HEK293T (cell line): ENCODE measurements at regions of chr7 and their contacts with region 1.

Region 1: DNA sequence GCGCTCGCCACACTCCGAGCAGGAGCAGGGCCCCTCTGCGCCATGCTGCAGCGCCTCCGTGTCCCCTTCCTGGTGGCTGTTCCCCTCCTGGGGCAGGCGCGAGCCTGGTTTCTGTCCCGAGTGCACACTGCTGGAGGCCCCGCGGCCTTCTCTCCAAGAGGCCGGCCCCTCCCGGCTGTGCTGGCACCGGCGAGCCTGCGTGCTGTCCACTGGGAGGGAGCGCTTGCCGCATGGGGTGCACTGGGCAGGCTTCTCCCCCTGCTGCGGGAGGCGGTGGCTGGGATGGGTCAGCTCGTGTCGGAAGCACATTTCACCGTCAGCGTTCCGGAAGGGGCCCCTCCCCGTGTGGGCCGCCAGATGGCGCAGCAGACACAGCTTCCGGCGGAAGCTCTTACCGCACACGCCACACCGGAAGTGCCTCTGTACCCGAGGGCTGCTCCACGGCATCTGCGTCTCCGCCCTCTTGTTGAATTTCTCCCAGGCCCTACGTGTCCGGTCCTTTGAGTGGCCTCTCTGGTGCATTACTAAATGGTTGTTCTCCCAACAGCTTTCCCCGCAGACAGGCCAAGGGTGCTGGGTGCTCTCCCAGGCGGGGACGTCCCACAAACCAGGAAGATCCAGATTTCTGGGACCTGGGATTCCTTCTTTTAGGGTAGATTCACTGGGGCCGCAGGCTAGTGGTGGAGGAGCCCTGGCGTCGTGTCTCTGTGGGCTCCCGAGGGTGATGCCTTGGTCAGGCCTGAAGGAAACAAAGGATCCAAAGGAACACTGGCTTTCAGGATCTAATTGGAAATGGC is 18.7 kb downstream of the ZNF786 start:
- DNase-seq: no peak

Region 2: GRCh38 chr7:149016876-149017275 is 55.0 kb before region 1 on chr7:
- CTCF ChIA-PET with region 1: no interaction called
- POLR2A ChIA-PET with region 1: no interaction called
- DNase-seq: no peak

Region 3: GRCh38 chr7:149060156-149060555 is 11.7 kb before region 1 on chr7:
- CTCF ChIA-PET with region 1: no interaction called
- POLR2A ChIA-PET with region 1: no interaction called
- DNase-seq: no peak

Region 4: DNA sequence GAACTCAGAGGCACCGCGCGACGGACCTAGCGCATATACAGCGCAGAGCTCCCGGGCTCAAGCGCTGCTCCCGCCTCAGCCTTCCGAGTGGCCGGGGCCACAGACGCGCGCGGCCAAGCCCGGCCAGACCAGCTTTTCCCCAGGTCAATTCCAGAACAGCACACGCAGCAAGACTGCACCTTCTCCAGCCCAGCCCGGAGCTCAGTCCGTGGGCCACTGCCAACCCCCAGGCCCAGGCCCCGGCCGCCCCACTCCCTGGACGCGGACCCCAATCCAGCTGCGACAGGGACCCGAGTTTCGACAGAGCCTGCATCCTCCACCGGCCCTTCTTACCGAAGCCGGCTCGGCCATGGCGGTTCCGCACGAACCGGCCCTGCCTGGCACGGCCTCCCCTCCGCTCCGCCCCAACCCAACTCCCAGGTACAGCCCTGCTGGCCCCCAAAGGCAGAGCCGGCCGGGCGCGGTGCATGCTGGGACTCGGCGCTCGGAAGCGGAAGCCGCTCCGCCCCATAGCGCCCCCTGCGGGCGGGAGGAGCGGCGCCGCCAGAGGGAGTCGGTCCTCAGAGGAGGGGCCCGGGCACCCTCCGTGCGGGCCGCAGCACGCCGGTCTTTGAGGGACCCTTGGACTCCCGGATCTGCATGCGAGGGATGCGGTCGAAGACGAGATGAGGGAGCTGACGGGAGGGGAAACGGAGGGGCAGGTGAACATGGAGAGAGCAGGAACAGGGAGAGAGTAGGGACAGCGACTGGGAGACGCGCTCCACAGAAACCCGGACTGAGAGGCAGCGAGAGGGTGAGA is 54.2 kb after region 1 on chr7 and contains the start of gene ZNF425:
- CTCF ChIA-PET with region 1: no interaction called
- POLR2A ChIA-PET with region 1: interaction called, 17 read pairs
- DNase-seq: peak; percentile 98